Left ventricle myocardium inferior (tissue), 1 donor: ENCODE measurements at regions of chr5 and their contacts with region 1.

Region 1: GRCh38 chr5:64207978-64208377 is 42.3 kb downstream of the RNF180 start:
- DNase-seq: no peak
- H3K4me3 ChIP-seq: no peak overlapping the region
- H3K27ac ChIP-seq: no peak overlapping the region
- H3K4me1 ChIP-seq: peaks cover 2% of the 10 kb centered on the region
- H3K27me3 ChIP-seq: no peaks in the 10 kb centered on the region
- CTCF ChIP-seq: peak; percentile 43

Region 2: GRCh38 chr5:64147849-64148441 is 60.0 kb before region 1 on chr5:
- intact Hi-C with region 1: loop called (anchors 5 kb)
- DNase-seq: peak; percentile 54
- H3K4me3 ChIP-seq: no peak overlapping the region
- H3K27ac ChIP-seq: no peak overlapping the region
- H3K4me1 ChIP-seq: peaks cover 20% of the 10 kb centered on the region
- H3K27me3 ChIP-seq: no peaks in the 10 kb centered on the region
- CTCF ChIP-seq: peak; percentile 81

Region 3: GRCh38 chr5:65640240-65640639 is 1432.3 kb after region 1 on chr5:
- intact Hi-C with region 1: no loop called
- DNase-seq: no peak
- H3K4me3 ChIP-seq: no peak overlapping the region
- H3K27ac ChIP-seq: no peak overlapping the region
- H3K4me1 ChIP-seq: no peaks in the 10 kb centered on the region
- H3K27me3 ChIP-seq: no peaks in the 10 kb centered on the region
- CTCF ChIP-seq: no peak